Dendritic cell treated with granulocyte-macrophage colony-stimulating factor and Interleukin-4, amounts not matched to agents 40 ng/mL and 50 ng/mL, for 4 days (primary cell): ENCODE measurements at regions of chr10 and their contacts with region 1.

Region 1: DNA sequence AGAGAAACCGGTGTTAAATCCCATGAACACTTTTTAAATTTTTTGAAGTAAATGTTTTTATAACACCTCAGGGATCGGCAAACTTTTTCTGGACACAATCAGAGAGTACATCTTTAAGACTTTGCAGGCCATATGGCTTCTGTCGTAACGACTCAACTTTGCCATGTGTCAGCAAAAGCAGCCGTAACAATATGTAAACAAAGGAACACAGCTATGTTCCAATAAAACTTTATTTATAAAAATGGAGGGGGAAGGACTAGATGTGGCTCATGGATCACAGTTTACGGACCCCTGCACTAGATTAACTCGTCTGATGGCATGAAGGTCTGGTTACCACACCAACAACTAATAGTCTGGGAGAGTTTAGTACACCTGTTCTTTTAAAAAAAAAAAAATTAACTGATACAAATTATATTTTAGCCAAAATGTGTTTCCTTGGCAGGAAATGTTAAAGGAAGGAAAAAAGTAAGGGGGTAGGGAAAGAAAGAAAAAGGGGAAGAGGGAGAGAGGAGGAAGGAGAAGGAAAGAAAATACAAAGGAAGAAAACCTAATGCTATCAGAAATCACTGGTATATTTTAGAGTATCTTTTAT is 50.2 kb downstream of the ABI1 start:
- H3K4me3 Mint-ChIP-seq: no peak overlapping the region
- H3K27ac Mint-ChIP-seq: no peak overlapping the region
- H3K4me1 Mint-ChIP-seq: peaks cover 26% of the 10 kb centered on the region
- H3K27me3 Mint-ChIP-seq: no peaks in the 10 kb centered on the region

Region 2: DNA sequence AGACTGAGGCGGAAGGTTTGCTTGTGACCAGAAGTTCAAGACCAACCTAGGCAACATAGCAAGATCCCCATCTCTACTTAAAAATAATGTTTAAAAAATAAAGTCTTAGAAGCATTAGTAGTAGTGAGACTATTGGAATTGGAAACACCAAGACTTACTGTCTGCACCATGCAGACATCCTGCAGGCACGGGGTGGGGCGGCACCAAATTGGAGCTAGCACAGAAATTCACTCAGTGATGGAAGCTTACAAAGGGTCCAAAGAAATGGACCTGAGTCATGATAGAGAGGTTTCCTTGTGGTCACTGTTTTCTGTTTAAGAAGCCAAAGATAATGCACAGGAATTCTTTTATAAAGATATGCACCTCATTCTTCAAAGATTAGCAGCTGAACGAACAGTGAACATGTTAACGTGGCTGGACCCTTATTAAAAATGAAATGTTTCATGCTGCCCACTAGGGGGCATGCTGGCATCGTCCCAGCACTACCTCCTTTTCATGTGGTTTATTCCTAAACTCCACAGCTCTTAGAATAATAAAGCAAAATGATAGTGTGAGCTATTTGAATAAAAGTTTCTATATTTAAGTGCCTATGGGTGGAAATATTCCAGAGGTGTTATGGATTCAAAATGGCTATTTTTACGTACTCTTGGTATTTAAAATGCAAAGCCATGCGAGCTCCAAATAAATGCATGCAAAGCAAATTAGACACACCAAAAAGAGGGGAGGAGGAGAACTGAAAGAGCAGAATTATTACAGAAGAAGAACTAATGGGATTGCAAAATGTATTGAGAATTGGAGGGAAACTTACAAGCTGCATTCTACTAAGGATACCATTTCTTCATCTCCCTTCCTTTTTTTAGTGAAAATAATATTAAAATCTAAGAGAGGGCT is 84.4 kb before region 1 on chr10:
- intact Hi-C with region 1: no loop called
- H3K4me3 Mint-ChIP-seq: no peak overlapping the region
- H3K27ac Mint-ChIP-seq: peak overlapping the region; percentile 34
- H3K4me1 Mint-ChIP-seq: peaks cover 17% of the 10 kb centered on the region
- H3K27me3 Mint-ChIP-seq: no peaks in the 10 kb centered on the region

Region 3: GRCh38 chr10:26846719-26847118 is 36.2 kb after region 1 on chr10:
- intact Hi-C with region 1: loop called (anchors 5 kb)
- H3K4me3 Mint-ChIP-seq: no peak overlapping the region
- H3K27ac Mint-ChIP-seq: no peak overlapping the region
- H3K4me1 Mint-ChIP-seq: peaks cover 51% of the 10 kb centered on the region
- H3K27me3 Mint-ChIP-seq: no peaks in the 10 kb centered on the region